ENCODE measurements at regions of chr2 and their contacts with region 1.

Region 1: GRCh38 chr2:43426305-43427031 is 169.4 kb downstream of the THADA start:
- DNase-seq: peak; percentile 82
- ATAC-seq: peak; percentile 94
- H3K4me3 Mint-ChIP-seq: no peak overlapping the region
- H3K27ac Mint-ChIP-seq: peak overlapping the region; percentile 43
- H3K4me1 Mint-ChIP-seq: peaks cover 34% of the 10 kb centered on the region
- H3K27me3 Mint-ChIP-seq: peaks cover 2% of the 10 kb centered on the region

Region 2: DNA sequence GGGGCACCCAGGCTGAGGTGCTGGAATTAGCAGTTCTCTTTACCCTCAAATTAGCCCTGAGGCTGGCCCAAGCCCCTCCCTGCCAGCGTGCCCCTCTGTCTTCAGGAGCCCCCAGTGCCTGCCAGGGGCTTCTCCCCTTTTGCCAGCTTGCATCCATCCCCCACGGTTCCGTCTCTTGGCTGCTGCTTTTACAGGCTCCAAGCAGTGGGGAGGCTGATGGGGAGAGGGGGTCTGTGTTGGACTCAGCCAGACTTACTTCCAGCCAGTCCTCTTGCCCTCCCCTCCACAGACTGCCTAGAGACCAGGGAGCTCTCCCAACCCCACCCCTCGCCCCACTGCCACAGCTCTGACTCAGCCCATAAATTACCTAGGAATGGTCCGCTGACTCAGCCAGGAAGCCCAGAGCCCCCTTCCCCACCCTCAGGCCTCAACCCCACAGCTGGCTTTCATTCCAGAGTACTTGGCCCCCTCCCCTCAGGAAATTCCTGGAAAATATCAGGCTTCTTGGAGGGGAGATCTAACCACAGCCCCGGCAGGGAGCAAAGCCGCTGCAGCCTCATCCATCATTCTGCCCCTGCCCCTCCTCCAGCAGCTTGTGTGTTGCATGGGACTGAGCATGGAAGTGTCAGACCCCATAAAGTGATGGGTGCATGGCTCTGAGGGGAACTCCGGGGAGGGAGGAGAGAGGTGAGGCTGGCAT is 384.7 kb before region 1 on chr2:
- CTCF ChIA-PET with region 1: no interaction called
- POLR2A ChIA-PET with region 1: interaction called, 14 read pairs
- intact Hi-C with region 1: no loop called
- DNase-seq: no peak
- ATAC-seq: no peak
- H3K4me3 Mint-ChIP-seq: no peak overlapping the region
- H3K27ac Mint-ChIP-seq: no peak overlapping the region
- H3K4me1 Mint-ChIP-seq: peaks cover 15% of the 10 kb centered on the region
- H3K27me3 Mint-ChIP-seq: no peaks in the 10 kb centered on the region

Region 3: DNA sequence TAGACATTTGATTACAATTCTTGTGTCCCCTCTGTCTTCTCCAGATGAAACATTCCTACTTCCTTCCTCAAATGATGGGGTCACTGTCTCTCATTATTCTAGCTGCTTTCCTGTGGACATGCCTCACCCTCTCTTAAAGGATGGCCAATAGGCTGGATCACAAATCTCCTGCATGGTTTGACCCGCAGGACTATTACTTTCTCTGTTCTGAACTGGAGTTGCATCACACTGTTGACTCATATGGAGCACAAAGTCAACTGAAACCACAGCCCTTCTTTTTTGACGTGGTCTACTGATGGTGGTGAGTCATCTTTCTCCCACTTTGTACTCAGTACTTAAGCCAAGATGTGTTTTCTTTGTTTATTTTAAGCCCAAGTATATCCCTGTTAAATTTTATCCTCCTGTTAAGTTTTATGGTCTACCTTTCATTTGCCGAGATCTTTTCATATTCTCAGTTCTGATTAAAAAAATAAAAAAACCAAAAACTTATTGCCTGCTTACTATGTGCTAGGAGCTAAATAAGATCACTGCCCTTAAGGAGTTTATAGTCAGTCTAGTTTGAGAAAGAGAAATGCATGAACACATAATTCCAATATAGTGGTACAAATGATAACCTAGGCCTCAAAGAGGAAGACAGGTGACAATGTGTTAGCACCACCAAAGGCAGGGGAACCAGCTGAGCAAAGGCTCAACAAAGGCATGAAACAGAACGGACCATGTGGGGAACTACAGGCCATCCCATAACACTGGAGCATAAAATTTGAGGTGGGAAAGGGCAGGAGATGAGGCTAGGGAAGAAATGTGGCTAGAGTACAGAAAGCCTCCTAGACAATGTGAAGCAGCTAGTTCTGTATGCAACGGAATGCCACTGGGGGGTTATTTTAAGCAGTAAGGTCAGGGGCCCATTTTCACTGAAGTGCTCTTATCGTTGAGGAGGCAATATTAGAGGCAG is 132.4 kb before region 1 on chr2:
- CTCF ChIA-PET with region 1: no interaction called
- POLR2A ChIA-PET with region 1: interaction called, 4 read pairs
- intact Hi-C with region 1: loop called (anchors 1 to 5 kb)
- DNase-seq: peak; percentile 49
- ATAC-seq: peak; percentile 98
- H3K4me3 Mint-ChIP-seq: peak overlapping the region; percentile 1
- H3K27ac Mint-ChIP-seq: peak overlapping the region; percentile 96
- H3K4me1 Mint-ChIP-seq: peaks cover 21% of the 10 kb centered on the region
- H3K27me3 Mint-ChIP-seq: no peaks in the 10 kb centered on the region

Region 4: DNA sequence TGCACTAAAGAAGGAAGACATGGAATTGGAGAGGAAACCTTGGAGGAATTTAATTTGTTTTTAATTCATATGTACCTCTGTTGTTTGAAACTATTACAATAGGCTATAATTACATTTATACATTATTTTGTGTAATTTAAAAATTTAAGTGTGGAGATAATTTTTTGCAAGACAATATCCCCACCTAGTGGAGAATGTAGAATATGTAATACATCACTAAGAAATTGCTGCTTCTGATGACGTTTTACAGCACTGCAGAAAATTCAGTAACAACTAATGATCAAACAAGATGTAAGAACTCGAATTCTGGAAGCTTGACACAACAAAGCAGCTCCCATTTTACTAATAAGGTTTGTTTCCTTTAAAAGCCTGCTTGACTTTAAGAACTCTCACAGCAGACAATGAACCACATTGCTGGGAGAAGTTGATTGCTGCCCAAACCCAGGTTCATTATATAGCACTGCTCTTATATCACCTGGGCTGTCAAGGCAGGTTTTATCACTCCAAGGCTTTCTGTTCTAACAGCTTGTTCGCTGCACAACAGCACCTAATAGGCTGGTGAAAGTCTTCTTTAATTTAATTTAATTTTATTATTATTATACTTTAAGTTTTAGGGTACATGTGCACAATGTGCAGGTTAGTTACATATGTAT is 115.9 kb after region 1 on chr2:
- CTCF ChIA-PET with region 1: interaction called, 3 read pairs
- POLR2A ChIA-PET with region 1: interaction called, 4 read pairs
- intact Hi-C with region 1: loop called in 1 of 2 experiments (anchors 1 kb)
- DNase-seq: no peak
- ATAC-seq: peak; percentile 60
- H3K4me3 Mint-ChIP-seq: no peak overlapping the region
- H3K27ac Mint-ChIP-seq: no peak overlapping the region
- H3K4me1 Mint-ChIP-seq: peaks cover 15% of the 10 kb centered on the region
- H3K27me3 Mint-ChIP-seq: no peaks in the 10 kb centered on the region

Region 5: DNA sequence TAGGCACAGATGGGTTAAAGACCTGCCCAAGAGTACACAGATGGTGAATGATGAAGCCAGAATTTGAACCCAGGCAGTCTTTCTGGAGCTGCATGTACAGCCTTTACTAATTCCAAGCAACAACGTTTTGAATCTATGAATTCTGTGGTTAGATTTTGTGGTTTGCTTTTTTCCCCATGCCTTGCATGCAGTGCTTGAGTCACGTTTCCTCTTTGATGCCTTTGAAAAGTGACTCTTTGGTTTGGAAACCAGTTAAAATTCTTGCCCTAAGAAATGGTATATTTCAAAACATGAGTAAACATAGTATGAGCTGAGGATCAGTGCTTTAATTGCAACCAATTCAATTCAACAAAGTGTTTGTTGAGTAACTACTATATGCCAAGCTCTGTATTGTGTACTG is 694.0 kb after region 1 on chr2:
- CTCF ChIA-PET with region 1: no interaction called
- POLR2A ChIA-PET with region 1: no interaction called
- intact Hi-C with region 1: loop called in 1 of 2 experiments (anchors 5 kb)
- DNase-seq: peak; percentile 38
- ATAC-seq: peak; percentile 78
- H3K4me3 Mint-ChIP-seq: no peak overlapping the region
- H3K27ac Mint-ChIP-seq: no peak overlapping the region
- H3K4me1 Mint-ChIP-seq: peaks cover 36% of the 10 kb centered on the region
- H3K27me3 Mint-ChIP-seq: peaks cover 2% of the 10 kb centered on the region

Measured in activated CD4-positive, alpha-beta T cell treated with anti-CD3 and anti-CD28 coated beads for 36 hours (primary cell).